HCT116 (cell line): ENCODE measurements at regions of chr2 and their contacts with region 1.

Region 1: DNA sequence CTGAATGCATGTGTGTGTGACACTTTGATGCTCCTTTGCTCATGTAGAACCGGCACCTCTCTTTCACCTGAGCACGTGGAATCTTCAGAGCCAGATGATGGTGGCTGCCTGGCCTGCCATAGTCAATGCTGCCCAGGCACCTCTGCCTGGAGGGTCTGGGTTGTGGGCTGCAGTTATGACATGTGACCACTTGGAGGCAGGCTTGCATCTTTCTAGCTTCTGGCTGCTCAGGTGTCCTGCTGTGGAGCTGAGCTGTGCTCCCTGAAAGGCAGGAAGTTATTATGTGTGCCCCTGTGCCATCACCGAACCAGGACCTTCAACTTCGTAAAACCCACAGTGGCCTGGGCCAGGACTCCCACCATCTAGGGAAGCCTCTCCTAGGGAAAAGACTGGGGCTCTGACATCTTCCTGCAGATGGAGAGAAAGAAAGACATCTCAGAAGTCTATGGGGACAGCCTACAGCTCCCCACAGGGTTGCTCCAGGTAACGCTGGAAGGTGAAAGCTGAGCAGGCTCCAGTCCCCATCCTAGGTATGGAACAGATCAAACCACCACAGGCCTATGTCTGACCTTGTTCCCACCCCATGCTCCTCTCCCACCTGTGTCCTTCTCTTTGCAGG is 30.2 kb downstream of the PSD4 start:
- DNase-seq: peak; percentile 72
- ATAC-seq: peak; percentile 76
- H3K4me3 ChIP-seq: peak overlapping the region in 1 of 2 experiments; percentile 1; a peak in 1 of 4 replicates
- H3K27ac ChIP-seq: peak overlapping the region; percentile 33; the same call in 1 of the 2 replicates
- H3K4me1 ChIP-seq: peaks cover 10 to 31% of the 10 kb centered on the region in 2 experiments
- H3K27me3 ChIP-seq: no peaks in the 10 kb centered on the region
- CTCF ChIP-seq: peak; percentile 90 to 95 (median 93)
- POLR2A ChIP-seq: no peak
- RAD21 ChIP-seq: peak; percentile 99

Region 2: GRCh38 chr2:112880091-112880531 is 323.9 kb before region 1 on chr2:
- CTCF ChIA-PET with region 1: no interaction called
- POLR2A ChIA-PET with region 1: no interaction called
- RAD21 ChIA-PET with region 1: no interaction called
- intact Hi-C with region 1: no loop called
- DNase-seq: no peak
- ATAC-seq: no peak
- H3K4me3 ChIP-seq: no peak overlapping the region
- H3K27ac ChIP-seq: no peak overlapping the region
- H3K4me1 ChIP-seq: peaks cover 3 to 30% of the 10 kb centered on the region in 2 experiments; a peak in 3 of 4 replicates
- H3K27me3 ChIP-seq: no peaks in the 10 kb centered on the region
- CTCF ChIP-seq: no peak
- POLR2A ChIP-seq: no peak
- RAD21 ChIP-seq: no peak

Region 3: GRCh38 chr2:112928856-112929255 is 275.2 kb before region 1 on chr2:
- CTCF ChIA-PET with region 1: no interaction called
- POLR2A ChIA-PET with region 1: no interaction called
- RAD21 ChIA-PET with region 1: no interaction called
- intact Hi-C with region 1: no loop called
- DNase-seq: no peak
- ATAC-seq: no peak
- H3K4me3 ChIP-seq: no peak overlapping the region
- H3K27ac ChIP-seq: no peak overlapping the region
- H3K4me1 ChIP-seq: peaks cover 0 to 7% of the 10 kb centered on the region in 2 experiments; a peak in 1 of 4 replicates
- H3K27me3 ChIP-seq: no peaks in the 10 kb centered on the region
- CTCF ChIP-seq: no peak
- POLR2A ChIP-seq: no peak
- RAD21 ChIP-seq: no peak

Region 4: DNA sequence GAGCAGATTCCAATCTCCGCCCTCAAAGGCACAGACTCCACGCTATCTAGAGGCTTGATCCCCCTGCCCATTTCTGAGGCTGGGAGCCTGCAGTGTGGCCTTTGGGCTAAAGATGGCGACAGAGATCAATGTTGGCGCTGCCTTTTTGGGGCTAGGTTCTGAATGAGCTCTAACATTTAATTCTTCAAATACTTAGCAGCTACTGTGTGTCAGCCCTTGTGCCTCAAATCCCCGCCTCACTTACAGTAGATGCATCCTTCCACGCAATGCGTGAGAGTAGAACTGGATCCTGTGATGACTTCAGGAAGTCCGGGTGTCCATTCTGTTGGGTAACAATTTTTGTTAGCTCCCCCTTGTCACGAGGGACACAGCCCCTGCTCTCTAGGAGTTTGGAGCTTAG is 123.9 kb before region 1 on chr2:
- CTCF ChIA-PET with region 1: interaction called, 62 read pairs
- POLR2A ChIA-PET with region 1: interaction called, 9 read pairs
- RAD21 ChIA-PET with region 1: interaction called, 3 to 12 read pairs
- intact Hi-C with region 1: loop called (anchors 1 kb)
- DNase-seq: peak; percentile 13
- ATAC-seq: peak; percentile 86
- H3K4me3 ChIP-seq: no peak overlapping the region
- H3K27ac ChIP-seq: no peak overlapping the region
- H3K4me1 ChIP-seq: peaks cover 12 to 26% of the 10 kb centered on the region in 2 experiments
- H3K27me3 ChIP-seq: no peaks in the 10 kb centered on the region
- CTCF ChIP-seq: peak; percentile 79 to 91 (median 85)
- POLR2A ChIP-seq: no peak
- RAD21 ChIP-seq: peak; percentile 87

Region 5: GRCh38 chr2:113111823-113112287 is 92.2 kb before region 1 on chr2:
- CTCF ChIA-PET with region 1: no interaction called
- POLR2A ChIA-PET with region 1: no interaction called
- RAD21 ChIA-PET with region 1: no interaction called
- intact Hi-C with region 1: no loop called
- DNase-seq: no peak
- ATAC-seq: no peak
- H3K4me3 ChIP-seq: no peak overlapping the region
- H3K27ac ChIP-seq: no peak overlapping the region
- H3K4me1 ChIP-seq: no peaks in the 10 kb centered on the region
- H3K27me3 ChIP-seq: no peaks in the 10 kb centered on the region
- CTCF ChIP-seq: no peak
- POLR2A ChIP-seq: no peak
- RAD21 ChIP-seq: no peak

Region 6: GRCh38 chr2:113233593-113234550 is 29.9 kb after region 1 on chr2:
- CTCF ChIA-PET with region 1: interaction called, 29 read pairs
- POLR2A ChIA-PET with region 1: interaction called, 11 read pairs
- RAD21 ChIA-PET with region 1: interaction called, 5 to 6 read pairs
- intact Hi-C with region 1: loop called (anchors 2 kb)
- DNase-seq: no peak
- ATAC-seq: peak; percentile 67
- H3K4me3 ChIP-seq: peak overlapping the region in 1 of 2 experiments; percentile 93; a peak in 1 of 4 replicates
- H3K27ac ChIP-seq: peak overlapping the region; percentile 95; the same call in 1 of the 2 replicates
- H3K4me1 ChIP-seq: peaks cover 34 to 43% of the 10 kb centered on the region in 2 experiments
- H3K27me3 ChIP-seq: no peaks in the 10 kb centered on the region
- CTCF ChIP-seq: peak in 2 of 3 experiments; percentile 29 to 40; a peak in 3 of 6 replicates
- POLR2A ChIP-seq: no peak
- RAD21 ChIP-seq: no peak

Region 7: DNA sequence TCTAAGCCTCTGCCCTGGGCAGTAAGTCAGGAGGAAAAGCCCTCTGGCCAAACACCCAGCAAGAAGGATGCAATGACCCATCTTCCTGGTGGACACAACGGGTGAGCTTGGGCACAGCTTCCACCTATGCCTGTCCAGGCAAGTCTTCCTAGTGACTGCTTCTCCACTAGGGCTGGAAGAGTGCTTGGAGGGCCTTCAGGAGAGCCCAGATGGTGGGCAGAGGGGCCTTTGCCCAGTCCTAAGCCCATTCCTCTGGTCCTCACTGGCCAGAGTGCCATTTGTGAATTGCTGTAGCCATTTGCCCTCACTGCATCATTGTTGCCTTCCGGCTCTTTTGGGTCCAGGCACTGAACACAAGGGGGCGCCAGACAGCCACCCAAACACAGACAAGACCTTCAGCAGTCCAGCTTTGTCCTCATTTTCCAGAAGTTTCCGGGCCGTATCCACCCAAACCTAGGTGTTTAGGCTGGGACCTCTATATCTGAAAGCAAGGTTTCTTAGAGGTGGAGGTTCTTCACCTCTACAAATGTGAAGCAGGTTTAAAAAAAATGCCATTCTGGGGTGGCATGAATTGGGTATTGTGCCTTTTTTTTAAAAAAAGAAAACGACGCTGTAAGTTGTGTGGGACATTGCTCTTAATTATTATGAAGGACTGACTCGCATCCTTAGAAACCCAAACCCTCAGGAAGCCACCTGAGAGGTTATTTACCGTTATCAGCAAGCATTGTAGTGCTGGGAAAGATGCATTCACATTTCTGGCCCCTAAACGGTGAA is 45.2 kb after region 1 on chr2:
- CTCF ChIA-PET with region 1: interaction called, 19 read pairs
- POLR2A ChIA-PET with region 1: interaction called, 3 read pairs
- RAD21 ChIA-PET with region 1: interaction called in 1 of 2 experiments, 5 read pairs
- intact Hi-C with region 1: loop called (anchors 1 kb)
- DNase-seq: peak; percentile 51
- ATAC-seq: peak; percentile 94
- H3K4me3 ChIP-seq: no peak overlapping the region
- H3K27ac ChIP-seq: peak overlapping the region; percentile 20
- H3K4me1 ChIP-seq: peaks cover 0 to 21% of the 10 kb centered on the region in 2 experiments; a peak in 1 of 4 replicates
- H3K27me3 ChIP-seq: no peaks in the 10 kb centered on the region
- CTCF ChIP-seq: peak in 2 of 3 experiments; percentile 91 to 97; a peak in 4 of 6 replicates
- POLR2A ChIP-seq: no peak
- RAD21 ChIP-seq: no peak

Region 8: DNA sequence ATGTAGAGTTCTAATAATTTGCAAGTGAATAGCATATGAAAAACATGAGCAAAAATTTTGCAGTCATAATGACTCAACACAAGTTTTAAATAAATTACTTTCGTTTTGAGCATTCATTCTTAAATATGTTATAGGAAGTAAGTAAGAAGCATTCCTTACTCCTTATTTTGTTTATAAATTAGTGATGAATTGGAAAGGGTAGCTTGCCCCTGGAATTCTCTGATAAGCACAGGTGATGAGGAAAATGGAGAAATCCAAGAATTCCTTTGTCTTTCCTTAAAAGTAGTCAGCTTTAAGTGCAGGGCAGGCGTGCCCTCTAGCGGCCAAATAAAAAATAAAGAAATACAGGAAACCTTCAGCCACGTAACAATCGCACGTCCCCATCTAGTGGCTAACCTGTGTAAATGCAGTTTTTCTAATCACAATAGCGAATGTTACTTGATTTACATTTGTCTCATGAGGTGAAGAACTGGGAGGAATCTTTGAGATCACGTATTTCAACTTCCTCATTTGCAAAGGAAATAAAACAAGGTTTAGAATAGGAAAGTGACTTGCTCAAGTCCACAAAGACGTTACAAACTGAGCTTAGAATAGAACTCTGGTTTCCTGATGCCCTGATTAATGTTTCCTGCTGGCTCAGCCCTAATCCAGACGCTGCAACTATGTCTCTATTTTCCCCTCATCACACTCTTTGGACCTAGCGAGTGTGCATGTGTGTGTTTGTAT is 186.3 kb after region 1 on chr2:
- CTCF ChIA-PET with region 1: interaction called, 30 read pairs
- POLR2A ChIA-PET with region 1: no interaction called
- RAD21 ChIA-PET with region 1: no interaction called
- intact Hi-C with region 1: loop called (anchors 5 kb)
- DNase-seq: peak; percentile 72
- ATAC-seq: peak; percentile 83
- H3K4me3 ChIP-seq: no peak overlapping the region
- H3K27ac ChIP-seq: no peak overlapping the region
- H3K4me1 ChIP-seq: no peaks in the 10 kb centered on the region
- H3K27me3 ChIP-seq: no peaks in the 10 kb centered on the region
- CTCF ChIP-seq: peak; percentile 66 to 98 (median 85)
- POLR2A ChIP-seq: no peak
- RAD21 ChIP-seq: peak; percentile 76